Endothelial cell of umbilical vein (primary cell): ENCODE measurements at regions of chr5 and their contacts with region 1.

Region 1: DNA sequence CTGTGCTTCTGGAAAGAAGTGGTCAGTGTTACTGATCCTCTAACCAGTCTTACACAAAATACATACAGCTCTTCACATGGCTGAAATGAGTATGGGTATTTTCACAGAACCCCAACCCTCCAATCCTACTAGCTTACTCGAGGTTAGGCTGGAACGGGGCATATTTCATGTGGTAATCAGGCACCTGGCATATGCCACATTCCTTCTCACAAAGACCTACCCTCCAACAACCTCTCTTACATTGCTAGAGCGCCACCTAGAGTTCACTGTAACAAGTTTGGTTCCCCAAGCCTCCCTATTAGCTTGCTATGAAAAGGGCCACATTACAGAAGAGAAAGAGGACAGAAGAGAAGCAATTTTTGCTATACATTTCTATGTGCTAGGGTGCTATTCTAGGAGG is 597.3 kb downstream of the PRELID2 start:
- DNase-seq: peak; percentile 72
- H3K4me3 ChIP-seq: no peak overlapping the region
- H3K27ac ChIP-seq: no peak overlapping the region
- H3K4me1 ChIP-seq: peaks cover 3% of the 10 kb centered on the region
- H3K27me3 ChIP-seq: no peaks in the 10 kb centered on the region
- CTCF ChIP-seq: peak; percentile 71 to 73
- POLR2A ChIP-seq: no peak

Region 2: DNA sequence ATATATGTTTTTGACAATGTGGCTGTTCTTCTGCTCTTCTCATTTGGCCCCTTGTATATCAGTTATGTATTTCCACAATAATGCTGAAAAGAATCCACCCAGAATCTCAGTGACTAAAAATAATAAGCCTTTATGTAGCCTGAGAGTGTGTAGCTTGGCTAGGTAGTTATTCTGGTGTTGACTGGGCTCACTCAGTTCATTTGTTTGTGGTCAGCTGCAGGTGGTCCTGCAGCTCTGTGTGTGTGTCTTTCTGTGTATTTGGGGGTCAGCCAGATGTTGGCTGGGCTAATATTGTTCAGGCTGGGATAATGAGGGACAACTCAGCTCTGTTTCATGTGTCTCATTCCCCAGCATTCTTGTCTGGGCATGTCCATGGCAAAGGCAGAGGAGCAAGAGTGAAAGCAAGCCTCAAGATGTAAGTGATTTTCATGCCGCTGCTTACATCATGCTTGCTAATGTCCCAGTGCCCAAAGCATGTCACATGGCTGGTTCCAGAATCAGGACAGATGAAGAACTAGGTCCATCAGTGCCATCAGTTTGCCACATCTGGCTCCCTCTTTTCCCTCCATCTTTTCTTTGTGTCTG is 904.4 kb before region 1 on chr5:
- CTCF ChIA-PET with region 1: interaction called, 6 read pairs
- POLR2A ChIA-PET with region 1: no interaction called
- dilution Hi-C with region 1: no loop called
- intact Hi-C with region 1: loop called (anchors 5 kb)
- DNase-seq: no peak
- H3K4me3 ChIP-seq: no peak overlapping the region
- H3K27ac ChIP-seq: no peak overlapping the region
- H3K4me1 ChIP-seq: no peaks in the 10 kb centered on the region
- H3K27me3 ChIP-seq: no peaks in the 10 kb centered on the region
- CTCF ChIP-seq: no peak
- POLR2A ChIP-seq: no peak

Region 3: GRCh38 chr5:144467792-144468191 is 770.1 kb before region 1 on chr5:
- CTCF ChIA-PET with region 1: interaction called, 24 read pairs
- POLR2A ChIA-PET with region 1: no interaction called
- dilution Hi-C with region 1: no loop called
- intact Hi-C with region 1: loop called (anchors 1 kb)
- DNase-seq: peak; percentile 40
- H3K4me3 ChIP-seq: no peak overlapping the region
- H3K27ac ChIP-seq: no peak overlapping the region
- H3K4me1 ChIP-seq: no peaks in the 10 kb centered on the region
- H3K27me3 ChIP-seq: no peaks in the 10 kb centered on the region
- CTCF ChIP-seq: peak; percentile 41 to 55
- POLR2A ChIP-seq: no peak

Region 4: GRCh38 chr5:144566747-144567420 is 671.0 kb before region 1 on chr5:
- CTCF ChIA-PET with region 1: no interaction called
- POLR2A ChIA-PET with region 1: no interaction called
- dilution Hi-C with region 1: no loop called
- intact Hi-C with region 1: no loop called
- DNase-seq: no peak
- H3K4me3 ChIP-seq: no peak overlapping the region
- H3K27ac ChIP-seq: no peak overlapping the region
- H3K4me1 ChIP-seq: no peaks in the 10 kb centered on the region
- H3K27me3 ChIP-seq: no peaks in the 10 kb centered on the region
- CTCF ChIP-seq: no peak
- POLR2A ChIP-seq: no peak

Region 5: DNA sequence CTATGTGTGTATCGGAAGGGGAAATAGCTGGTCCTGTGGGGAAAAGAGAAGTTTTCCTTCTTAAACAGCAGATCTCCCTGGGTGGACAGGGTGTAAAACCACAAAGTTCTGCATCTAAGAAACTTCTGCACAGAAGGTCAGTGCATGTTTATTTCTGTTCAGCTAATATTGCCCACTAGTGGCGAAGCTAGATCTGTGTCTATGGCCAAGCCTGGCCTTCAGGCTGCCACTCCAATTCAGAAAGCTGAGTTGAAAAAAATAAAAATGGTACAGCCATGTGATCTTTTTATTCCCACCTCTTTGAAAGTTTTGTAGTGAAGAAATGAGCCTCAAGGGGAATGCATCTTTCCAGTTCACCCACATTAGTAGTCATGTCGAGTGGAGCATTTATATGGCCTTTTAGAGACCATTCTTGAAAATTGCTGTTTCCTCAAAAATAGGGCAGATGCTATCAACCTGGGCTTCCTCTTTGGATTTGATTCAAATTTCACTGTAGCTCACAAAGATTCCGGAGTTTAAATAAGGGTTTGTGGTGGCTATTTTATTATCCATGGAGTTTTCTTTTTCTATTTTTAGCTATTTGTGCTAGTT is 109.3 kb after region 1 on chr5:
- CTCF ChIA-PET with region 1: interaction called, 15 read pairs
- POLR2A ChIA-PET with region 1: no interaction called
- dilution Hi-C with region 1: no loop called
- intact Hi-C with region 1: loop called (anchors 2 kb)
- DNase-seq: peak; percentile 64
- H3K4me3 ChIP-seq: no peak overlapping the region
- H3K27ac ChIP-seq: no peak overlapping the region
- H3K4me1 ChIP-seq: peaks cover 21% of the 10 kb centered on the region
- H3K27me3 ChIP-seq: no peaks in the 10 kb centered on the region
- CTCF ChIP-seq: peak; percentile 50 to 64
- POLR2A ChIP-seq: no peak

Region 6: DNA sequence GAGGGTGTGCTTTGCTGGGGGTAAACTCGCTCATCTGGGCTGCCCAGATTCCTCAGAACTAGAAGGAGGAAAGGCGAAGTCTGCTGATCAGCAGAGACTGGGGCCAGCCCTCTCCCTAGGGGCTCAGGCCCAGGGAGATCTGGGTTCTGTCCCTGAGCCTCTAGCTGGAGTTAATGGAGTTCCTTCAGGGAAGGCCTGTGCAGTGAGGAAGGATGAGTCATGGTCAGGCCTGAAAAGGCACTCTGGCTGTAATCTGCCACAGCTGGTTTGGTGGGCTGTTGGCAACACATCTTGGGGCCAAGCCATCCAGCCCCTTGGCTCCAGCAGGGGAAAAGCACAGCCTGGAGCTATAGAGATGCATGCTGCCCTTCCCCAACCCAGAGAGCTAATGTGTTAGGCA is 137.7 kb after region 1 on chr5:
- CTCF ChIA-PET with region 1: no interaction called
- POLR2A ChIA-PET with region 1: no interaction called
- dilution Hi-C with region 1: no loop called
- intact Hi-C with region 1: no loop called
- DNase-seq: no peak
- H3K4me3 ChIP-seq: no peak overlapping the region
- H3K27ac ChIP-seq: no peak overlapping the region
- H3K4me1 ChIP-seq: no peaks in the 10 kb centered on the region
- H3K27me3 ChIP-seq: no peaks in the 10 kb centered on the region
- CTCF ChIP-seq: no peak
- POLR2A ChIP-seq: no peak

Region 7: DNA sequence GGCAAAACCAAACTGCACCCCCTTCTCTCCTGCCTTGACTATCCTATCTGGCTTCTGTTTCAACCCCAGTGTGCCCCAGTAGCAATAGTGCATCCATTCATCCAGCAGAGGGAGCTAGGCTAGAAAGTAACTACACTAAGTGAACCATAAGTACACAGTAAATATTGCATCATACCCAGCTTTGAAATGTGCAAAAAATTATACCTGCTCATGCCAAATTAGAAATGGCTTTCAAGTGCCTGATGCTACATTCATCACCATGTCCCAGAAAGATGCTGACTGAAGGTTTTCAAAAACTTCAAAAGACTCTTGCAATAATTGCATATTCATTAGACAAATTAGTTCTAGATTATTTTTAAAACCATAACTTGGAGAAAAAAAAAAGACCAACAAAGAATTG is 443.8 kb after region 1 on chr5:
- CTCF ChIA-PET with region 1: interaction called, 10 read pairs
- POLR2A ChIA-PET with region 1: no interaction called
- dilution Hi-C with region 1: no loop called
- intact Hi-C with region 1: loop called (anchors 5 kb)
- DNase-seq: peak; percentile 75
- H3K4me3 ChIP-seq: no peak overlapping the region
- H3K27ac ChIP-seq: no peak overlapping the region
- H3K4me1 ChIP-seq: no peaks in the 10 kb centered on the region
- H3K27me3 ChIP-seq: no peaks in the 10 kb centered on the region
- CTCF ChIP-seq: peak; percentile 78 to 86
- POLR2A ChIP-seq: no peak

Region 8: GRCh38 chr5:145718956-145719355 is 481.1 kb after region 1 on chr5:
- CTCF ChIA-PET with region 1: interaction called, 10 read pairs
- POLR2A ChIA-PET with region 1: no interaction called
- dilution Hi-C with region 1: no loop called
- intact Hi-C with region 1: no loop called
- DNase-seq: peak; percentile 24
- H3K4me3 ChIP-seq: no peak overlapping the region
- H3K27ac ChIP-seq: no peak overlapping the region
- H3K4me1 ChIP-seq: no peaks in the 10 kb centered on the region
- H3K27me3 ChIP-seq: no peaks in the 10 kb centered on the region
- CTCF ChIP-seq: peak; percentile 22 to 36
- POLR2A ChIP-seq: no peak